ENCODE measurements at regions of chr17 and their contacts with region 1.

Region 1: DNA sequence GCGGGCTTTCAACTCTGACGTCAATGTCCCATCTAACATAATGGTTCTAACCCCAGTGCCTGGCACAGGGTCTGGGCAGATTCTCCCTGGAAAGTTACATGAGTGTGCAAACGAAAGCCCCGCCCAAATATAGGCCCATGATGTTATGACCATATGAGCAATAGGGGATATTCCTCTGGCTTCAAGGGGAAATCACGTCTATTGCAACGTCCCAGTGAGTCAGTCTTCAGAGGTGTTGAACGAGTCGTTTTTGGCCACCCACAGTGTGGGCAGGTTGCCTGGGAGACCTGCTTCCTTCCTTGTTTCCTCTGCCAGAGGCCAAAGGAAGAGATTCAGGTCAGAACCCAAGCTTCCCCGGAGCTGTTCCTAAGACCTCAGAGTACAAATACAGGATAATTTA is 30.3 kb downstream of the PIK3R5 start:
- DNase-seq: peak; percentile 92
- H3K4me3 Mint-ChIP-seq: peak overlapping the region; percentile 14
- H3K27ac Mint-ChIP-seq: peak overlapping the region; percentile 88
- H3K4me1 Mint-ChIP-seq: peaks cover 72% of the 10 kb centered on the region
- H3K27me3 Mint-ChIP-seq: no peaks in the 10 kb centered on the region

Region 2: DNA sequence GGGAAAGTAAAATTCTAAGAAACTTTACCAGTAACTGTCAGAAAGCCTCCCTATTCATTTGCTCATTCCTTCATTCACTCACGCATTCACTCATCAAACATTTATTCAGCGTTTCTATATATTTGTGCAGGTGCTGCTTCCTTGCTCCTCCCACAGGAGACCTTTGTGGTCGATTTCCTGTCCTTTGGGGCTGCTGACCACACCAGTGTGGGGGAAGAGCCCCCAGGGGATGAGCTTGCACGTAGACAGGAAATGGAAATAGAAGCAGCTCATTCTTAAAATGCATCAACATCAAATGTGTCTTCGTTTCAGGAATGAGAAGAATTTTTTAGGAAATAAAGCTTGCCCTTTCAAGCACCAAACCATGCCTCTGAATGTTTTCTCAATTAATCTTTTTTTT is 77.3 kb before region 1 on chr17:
- CTCF ChIA-PET with region 1: interaction called, 3 read pairs
- POLR2A ChIA-PET with region 1: no interaction called
- intact Hi-C with region 1: loop called (anchors 5 kb)
- DNase-seq: peak; percentile 82
- H3K4me3 Mint-ChIP-seq: no peak overlapping the region
- H3K27ac Mint-ChIP-seq: no peak overlapping the region
- H3K4me1 Mint-ChIP-seq: peaks cover 46% of the 10 kb centered on the region
- H3K27me3 Mint-ChIP-seq: no peaks in the 10 kb centered on the region

Region 3: GRCh38 chr17:8912084-8912981 is 22.9 kb before region 1 on chr17:
- CTCF ChIA-PET with region 1: no interaction called
- POLR2A ChIA-PET with region 1: no interaction called
- intact Hi-C with region 1: no loop called
- DNase-seq: no peak
- H3K4me3 Mint-ChIP-seq: no peak overlapping the region
- H3K27ac Mint-ChIP-seq: no peak overlapping the region
- H3K4me1 Mint-ChIP-seq: peaks cover 22% of the 10 kb centered on the region
- H3K27me3 Mint-ChIP-seq: no peaks in the 10 kb centered on the region

Region 4: GRCh38 chr17:8922451-8922850 is 12.7 kb before region 1 on chr17:
- CTCF ChIA-PET with region 1: no interaction called
- POLR2A ChIA-PET with region 1: interaction called, 6 read pairs
- intact Hi-C with region 1: loop called (anchors 1 kb)
- DNase-seq: no peak
- H3K4me3 Mint-ChIP-seq: no peak overlapping the region
- H3K27ac Mint-ChIP-seq: peak overlapping the region; percentile 79
- H3K4me1 Mint-ChIP-seq: peaks cover 33% of the 10 kb centered on the region
- H3K27me3 Mint-ChIP-seq: no peaks in the 10 kb centered on the region

Region 5: DNA sequence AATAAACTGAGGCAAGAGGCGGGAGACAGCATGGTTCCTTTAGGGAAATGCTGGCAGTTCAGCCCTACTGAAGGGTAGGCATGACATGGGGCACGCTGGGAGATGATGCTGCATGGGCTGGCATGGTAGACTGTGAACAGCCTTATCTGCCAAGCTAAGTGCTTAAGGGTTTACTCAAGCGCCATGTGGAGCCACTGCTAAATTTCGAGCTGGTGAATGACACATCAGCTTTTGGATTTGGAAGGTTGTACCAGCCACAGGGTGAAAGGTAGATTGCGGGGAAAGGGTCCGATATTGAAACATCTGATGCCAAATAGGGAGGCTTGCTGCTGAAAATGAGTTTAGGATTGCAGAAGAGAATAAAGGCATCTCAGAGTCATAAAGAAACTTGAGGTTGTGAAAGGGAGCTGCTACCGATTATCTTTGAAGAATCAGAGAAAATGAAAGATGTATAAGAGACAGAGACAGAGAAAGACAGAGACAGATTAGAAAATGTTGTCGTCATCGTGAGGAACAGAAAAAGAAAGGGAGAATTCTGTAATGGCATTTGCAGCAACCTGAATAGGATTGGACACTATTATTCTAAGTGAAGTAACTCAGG is 14.0 kb after region 1 on chr17:
- CTCF ChIA-PET with region 1: interaction called, 8 read pairs
- POLR2A ChIA-PET with region 1: interaction called, 12 read pairs
- intact Hi-C with region 1: loop called (anchors 1 kb)
- DNase-seq: peak; percentile 64
- H3K4me3 Mint-ChIP-seq: peak overlapping the region; percentile 54
- H3K27ac Mint-ChIP-seq: peak overlapping the region; percentile 81
- H3K4me1 Mint-ChIP-seq: peaks cover 89% of the 10 kb centered on the region
- H3K27me3 Mint-ChIP-seq: no peaks in the 10 kb centered on the region

Measured in activated CD4-positive, alpha-beta memory T cell treated with anti-CD3 and anti-CD28 coated beads for 36 hours (primary cell).